CD4-positive, alpha-beta T cell (primary cell): ENCODE measurements at regions of chr9 and their contacts with region 1.

Region 1: GRCh38 chr9:95875305-95876137 is at the start of gene ERCC6L2:
- DNase-seq: peak; percentile 85 to 96 (median 90)
- ATAC-seq: peak; percentile 77
- H3K4me3 ChIP-seq: no peak within 1 kb of the TSS
- H3K4me3 Mint-ChIP-seq: no peak within 1 kb of the TSS
- H3K27ac ChIP-seq: no peak within 1 kb of the TSS
- H3K27ac Mint-ChIP-seq: no peak within 1 kb of the TSS
- H3K4me1 ChIP-seq: peaks cover 20% of the 10 kb centered on the region
- H3K4me1 Mint-ChIP-seq: peaks cover 32% of the 10 kb centered on the region
- H3K27me3 ChIP-seq: no peaks in the 10 kb centered on the region
- H3K27me3 Mint-ChIP-seq: no peaks in the 10 kb centered on the region
- CTCF ChIP-seq: no peak
- total RNA-seq, gene ERCC6L2: 30.8 to 31.3 TPM

Region 2: GRCh38 chr9:95317119-95317892 is 558.2 kb before region 1 on chr9 and contains the start of gene FANCC:
- CTCF ChIA-PET with region 1: no interaction called
- POLR2A ChIA-PET with region 1: no interaction called
- intact Hi-C with region 1: loop called in 1 of 2 experiments (anchors 10 kb)
- DNase-seq: peak; percentile 65 to 92 (median 82)
- ATAC-seq: peak; percentile 88
- H3K4me3 ChIP-seq: peak within 1 kb of the TSS; percentile 96
- H3K4me3 Mint-ChIP-seq: peak within 1 kb of the TSS; percentile 96
- H3K27ac ChIP-seq: peak within 1 kb of the TSS; percentile 37 to 42
- H3K27ac Mint-ChIP-seq: peak within 1 kb of the TSS; percentile 86
- H3K4me1 ChIP-seq: peaks cover 14% of the 10 kb centered on the region
- H3K4me1 Mint-ChIP-seq: peaks cover 27% of the 10 kb centered on the region
- H3K27me3 ChIP-seq: no peaks in the 10 kb centered on the region
- H3K27me3 Mint-ChIP-seq: peaks cover 9% of the 10 kb centered on the region
- CTCF ChIP-seq: no peak
- total RNA-seq, gene FANCC: 5.7 to 6.3 TPM

Region 3: GRCh38 chr9:95363051-95363841 is 512.3 kb before region 1 on chr9:
- CTCF ChIA-PET with region 1: no interaction called
- POLR2A ChIA-PET with region 1: no interaction called
- intact Hi-C with region 1: no loop called
- DNase-seq: no peak
- ATAC-seq: no peak
- H3K4me3 ChIP-seq: no peak overlapping the region
- H3K4me3 Mint-ChIP-seq: no peak overlapping the region
- H3K27ac ChIP-seq: no peak overlapping the region
- H3K27ac Mint-ChIP-seq: no peak overlapping the region
- H3K4me1 ChIP-seq: no peaks in the 10 kb centered on the region
- H3K4me1 Mint-ChIP-seq: no peaks in the 10 kb centered on the region
- H3K27me3 ChIP-seq: peaks cover 0 to 14% of the 10 kb centered on the region in 2 experiments
- H3K27me3 Mint-ChIP-seq: peaks cover 41% of the 10 kb centered on the region
- CTCF ChIP-seq: no peak

Region 4: DNA sequence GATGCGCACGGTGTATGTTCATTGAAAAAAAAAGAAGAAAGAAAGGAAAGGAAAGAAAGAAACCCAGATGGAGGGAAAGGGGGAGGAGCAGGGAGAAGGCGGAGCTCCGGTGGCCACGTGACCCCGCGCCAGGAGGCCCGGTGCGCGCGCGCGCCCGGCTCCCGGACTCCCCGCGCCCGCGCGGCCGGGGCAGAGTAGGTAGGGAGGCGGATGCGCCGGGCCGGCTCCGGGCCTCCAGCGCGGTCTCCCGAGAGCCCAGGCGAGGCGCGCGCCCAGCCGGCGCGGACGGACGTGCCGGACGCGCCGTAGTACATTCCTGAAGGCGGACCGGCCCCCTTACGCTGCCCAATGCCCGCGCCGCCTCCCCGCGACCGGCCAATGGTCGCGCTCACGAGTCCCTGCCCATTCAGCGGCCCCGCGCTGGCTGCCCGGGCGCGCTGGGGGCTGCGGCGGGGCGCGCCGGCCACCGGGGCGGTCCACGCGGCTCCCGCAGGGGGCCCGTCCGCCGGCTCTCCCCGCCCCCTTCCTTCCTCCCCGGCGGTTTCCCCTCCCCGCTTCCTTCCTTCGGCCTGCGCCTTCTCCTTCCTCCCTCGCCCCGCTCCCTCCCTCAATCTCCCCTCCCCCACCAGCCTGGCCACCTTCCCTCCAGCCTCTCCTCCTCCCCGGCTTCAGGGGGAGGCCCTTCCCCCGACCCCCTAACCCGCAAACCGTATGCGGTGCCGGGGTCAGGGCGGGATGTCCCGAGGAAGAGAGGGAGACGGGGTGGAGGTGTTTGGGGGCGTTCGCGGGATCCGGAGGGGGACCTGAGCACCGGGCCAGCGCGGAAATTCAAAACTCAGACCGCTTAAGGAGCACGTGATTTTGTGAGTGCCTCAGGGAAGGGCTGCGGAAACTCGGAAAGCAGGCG is 364.6 kb before region 1 on chr9:
- CTCF ChIA-PET with region 1: no interaction called
- POLR2A ChIA-PET with region 1: interaction called, 14 read pairs
- intact Hi-C with region 1: loop called (anchors 2 to 5 kb)
- DNase-seq: peak; percentile 59 to 92 (median 82)
- ATAC-seq: peak; percentile 54
- H3K4me3 ChIP-seq: peak overlapping the region; percentile 73
- H3K4me3 Mint-ChIP-seq: peak overlapping the region; percentile 93
- H3K27ac ChIP-seq: no peak overlapping the region
- H3K27ac Mint-ChIP-seq: peak overlapping the region; percentile 83
- H3K4me1 ChIP-seq: peaks cover 56% of the 10 kb centered on the region
- H3K4me1 Mint-ChIP-seq: peaks cover 53% of the 10 kb centered on the region
- H3K27me3 ChIP-seq: peaks cover 11 to 15% of the 10 kb centered on the region in 2 experiments
- H3K27me3 Mint-ChIP-seq: peaks cover 15% of the 10 kb centered on the region
- CTCF ChIP-seq: no peak

Region 5: DNA sequence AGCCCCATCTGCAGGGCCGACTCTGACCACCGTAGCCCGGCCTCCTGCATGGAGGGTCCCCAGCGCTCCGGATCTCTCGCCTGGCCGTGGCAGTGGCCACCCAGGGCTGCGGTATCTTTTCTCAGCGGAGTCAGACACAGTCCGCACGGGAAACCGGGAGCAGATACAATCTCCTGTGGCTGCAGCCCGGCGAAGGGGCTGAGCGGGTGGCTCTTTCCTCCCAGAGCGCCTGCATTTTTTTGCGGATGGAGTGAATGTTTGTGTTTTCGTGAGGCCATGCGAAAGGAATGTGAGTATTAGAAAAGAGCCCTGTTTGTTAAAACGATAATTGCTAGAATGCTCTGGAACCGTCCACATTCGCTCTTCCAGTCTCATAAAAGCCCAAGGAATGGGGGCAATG is 305.4 kb before region 1 on chr9:
- CTCF ChIA-PET with region 1: no interaction called
- POLR2A ChIA-PET with region 1: no interaction called
- intact Hi-C with region 1: no loop called
- DNase-seq: no peak
- ATAC-seq: no peak
- H3K4me3 ChIP-seq: no peak overlapping the region
- H3K4me3 Mint-ChIP-seq: peak overlapping the region; percentile 20
- H3K27ac ChIP-seq: no peak overlapping the region
- H3K27ac Mint-ChIP-seq: no peak overlapping the region
- H3K4me1 ChIP-seq: peaks cover 10% of the 10 kb centered on the region
- H3K4me1 Mint-ChIP-seq: peaks cover 17% of the 10 kb centered on the region
- H3K27me3 ChIP-seq: peaks cover 27 to 31% of the 10 kb centered on the region in 2 experiments
- H3K27me3 Mint-ChIP-seq: peaks cover 20% of the 10 kb centered on the region
- CTCF ChIP-seq: no peak

Region 6: GRCh38 chr9:95726756-95727155 is 148.8 kb before region 1 on chr9:
- CTCF ChIA-PET with region 1: no interaction called
- POLR2A ChIA-PET with region 1: interaction called, 7 read pairs
- intact Hi-C with region 1: loop called (anchors 1 to 10 kb)
- DNase-seq: peak in 3 of 14 experiments; percentile 42 to 54 (median 43)
- ATAC-seq: no peak
- H3K4me3 ChIP-seq: no peak overlapping the region
- H3K4me3 Mint-ChIP-seq: no peak overlapping the region
- H3K27ac ChIP-seq: no peak overlapping the region
- H3K27ac Mint-ChIP-seq: no peak overlapping the region
- H3K4me1 ChIP-seq: peaks cover 26% of the 10 kb centered on the region
- H3K4me1 Mint-ChIP-seq: peaks cover 47% of the 10 kb centered on the region
- H3K27me3 ChIP-seq: no peaks in the 10 kb centered on the region
- H3K27me3 Mint-ChIP-seq: no peaks in the 10 kb centered on the region
- CTCF ChIP-seq: no peak

Region 7: GRCh38 chr9:95887926-95888497 is 12.5 kb after region 1 on chr9:
- CTCF ChIA-PET with region 1: interaction called, 8 read pairs
- POLR2A ChIA-PET with region 1: interaction called, 99 read pairs
- intact Hi-C with region 1: loop called in 1 of 2 experiments (anchors 2 kb)
- DNase-seq: peak in 3 of 14 experiments; percentile 34 to 50 (median 46)
- ATAC-seq: peak; percentile 80
- H3K4me3 ChIP-seq: no peak overlapping the region
- H3K4me3 Mint-ChIP-seq: peak overlapping the region; percentile 69
- H3K27ac ChIP-seq: peak overlapping the region in 1 of 2 donors; percentile 38
- H3K27ac Mint-ChIP-seq: peak overlapping the region; percentile 79
- H3K4me1 ChIP-seq: peaks cover 24% of the 10 kb centered on the region
- H3K4me1 Mint-ChIP-seq: peaks cover 81% of the 10 kb centered on the region
- H3K27me3 ChIP-seq: no peaks in the 10 kb centered on the region
- H3K27me3 Mint-ChIP-seq: no peaks in the 10 kb centered on the region
- CTCF ChIP-seq: no peak

Region 8: DNA sequence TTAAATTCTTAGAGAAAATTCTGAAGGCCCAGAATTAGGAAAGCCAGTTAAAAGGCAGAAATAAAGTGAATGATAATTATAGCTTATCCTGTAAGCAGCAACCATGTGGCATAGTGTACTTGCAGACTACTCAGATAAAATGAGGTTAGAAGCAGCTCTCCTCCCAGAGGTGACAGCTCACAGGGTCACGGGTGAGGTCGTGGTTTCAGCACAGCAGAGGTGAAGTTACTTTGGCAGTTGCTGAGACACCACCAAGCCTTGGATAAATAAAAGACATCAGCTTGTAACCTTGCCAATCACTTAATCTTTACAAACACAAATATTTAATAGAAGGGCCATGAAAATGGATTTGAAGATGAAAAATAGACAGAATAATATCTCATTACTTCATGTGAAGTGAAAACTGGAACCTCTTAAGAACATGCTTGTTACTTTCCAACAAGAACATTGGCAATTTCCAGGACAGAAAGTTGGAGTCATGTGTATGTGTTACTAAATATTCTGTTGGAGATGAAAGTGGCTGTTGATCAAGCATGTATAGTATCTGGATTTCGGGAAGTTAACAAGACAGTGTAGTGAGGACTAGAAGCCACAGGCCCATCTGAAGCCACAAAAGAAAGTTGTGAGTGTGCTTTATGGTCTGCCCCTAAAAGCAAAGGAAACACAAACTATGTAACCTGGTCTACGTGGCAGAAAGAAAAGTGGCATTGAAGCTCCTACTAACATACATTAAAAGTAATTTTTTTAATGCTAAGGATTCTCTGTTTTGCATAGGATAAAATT is 134.4 kb after region 1 on chr9:
- CTCF ChIA-PET with region 1: no interaction called
- POLR2A ChIA-PET with region 1: interaction called, 8 read pairs
- intact Hi-C with region 1: loop called in 1 of 2 experiments (anchors 10 kb)
- DNase-seq: peak; percentile 38 to 86 (median 48)
- ATAC-seq: peak; percentile 76
- H3K4me3 ChIP-seq: no peak overlapping the region
- H3K4me3 Mint-ChIP-seq: peak overlapping the region; percentile 31
- H3K27ac ChIP-seq: peak overlapping the region; percentile 49 to 58
- H3K27ac Mint-ChIP-seq: peak overlapping the region; percentile 89
- H3K4me1 ChIP-seq: peaks cover 46% of the 10 kb centered on the region
- H3K4me1 Mint-ChIP-seq: peaks cover 52% of the 10 kb centered on the region
- H3K27me3 ChIP-seq: no peaks in the 10 kb centered on the region
- H3K27me3 Mint-ChIP-seq: no peaks in the 10 kb centered on the region
- CTCF ChIP-seq: no peak